Cardiac septum (tissue), 1 donor: ENCODE measurements at regions of chr9 and their contacts with region 1.

Region 1: GRCh38 chr9:14768405-14769229 is 46.1 kb upstream of the CER1 start:
- DNase-seq: no peak

Region 2: DNA sequence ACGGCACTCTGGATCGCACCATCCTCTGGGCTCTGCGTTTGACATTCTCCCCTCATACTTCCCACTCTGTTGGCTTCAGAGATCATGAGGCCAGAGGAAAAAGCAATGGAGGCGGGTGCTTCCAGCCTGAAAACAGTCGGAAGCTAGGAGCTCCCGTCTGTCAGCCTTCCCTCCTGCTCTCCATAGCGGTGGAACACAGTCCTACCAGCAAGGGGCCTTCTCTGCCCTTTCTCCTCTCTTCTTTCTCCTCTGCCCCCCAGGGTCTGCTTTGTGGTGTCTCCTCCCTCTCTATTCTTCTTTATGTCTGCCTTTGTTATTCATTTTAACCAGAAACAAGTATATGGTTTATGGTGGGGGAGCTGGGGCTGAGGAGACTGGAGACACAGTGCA is 302.2 kb before region 1 on chr9:
- intact Hi-C with region 1: loop called (anchors 5 kb)
- DNase-seq: no peak

Region 3: GRCh38 chr9:14616188-14616982 is 152.2 kb before region 1 on chr9:
- intact Hi-C with region 1: loop called (anchors 2 kb)
- DNase-seq: no peak

Region 4: DNA sequence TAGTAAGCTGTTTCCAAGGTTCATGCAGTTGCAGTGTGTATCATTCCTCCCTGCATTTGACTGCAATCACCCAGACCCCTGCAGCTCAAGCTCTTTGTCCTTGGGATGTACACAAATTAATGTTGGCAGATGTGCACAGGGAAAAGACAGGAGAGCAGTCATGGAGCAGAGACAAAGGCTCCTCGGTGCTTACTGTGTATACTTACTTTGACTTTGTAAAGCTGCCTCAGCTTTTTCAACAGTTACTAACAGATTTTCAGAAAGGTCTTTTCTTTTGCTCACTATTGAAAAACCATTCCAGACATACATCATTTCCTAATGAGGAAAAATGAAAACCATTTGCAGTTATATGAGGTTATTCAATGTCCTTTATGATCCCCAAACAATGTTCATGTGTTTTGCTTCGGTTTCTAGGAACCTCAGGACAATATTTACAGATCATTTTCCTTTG is 413.5 kb after region 1 on chr9:
- intact Hi-C with region 1: no loop called
- DNase-seq: no peak